ENCODE measurements at regions of chr2 and their contacts with region 1.

Region 1: DNA sequence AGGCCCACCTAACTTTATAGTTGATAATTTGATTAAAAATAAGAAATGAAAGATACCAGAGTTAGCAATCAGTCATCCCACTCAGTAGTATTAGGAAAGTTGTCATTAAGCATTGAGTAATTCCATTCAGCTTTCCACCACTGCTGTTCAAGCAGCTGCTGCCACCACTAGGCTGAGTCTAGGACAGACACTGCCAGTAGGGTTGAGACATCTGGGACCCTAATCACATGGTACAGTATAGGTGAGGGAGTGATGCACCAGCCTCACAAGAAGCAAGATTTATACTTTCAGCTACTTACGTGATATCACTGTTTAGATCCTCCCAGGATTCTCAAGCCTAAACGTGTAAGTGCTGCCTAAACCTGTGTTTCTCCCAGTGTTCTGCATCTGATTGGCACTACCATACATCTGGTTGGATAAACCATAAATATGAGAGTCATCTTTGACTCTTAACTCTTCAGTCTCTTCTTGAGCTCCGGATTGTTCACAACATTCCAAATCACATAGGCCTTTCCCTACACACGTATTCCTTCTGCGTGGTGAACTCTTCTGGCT is 3.2 kb downstream of the UBXN4 start:
- DNase-seq: peak; percentile 34 to 60 (median 52)
- H3K4me3 ChIP-seq: no peak overlapping the region
- H3K27ac ChIP-seq: no peak overlapping the region
- H3K4me1 ChIP-seq: peaks cover 6 to 19% (median 18%) of the 10 kb centered on the region in 4 experiments
- H3K27me3 ChIP-seq: no peaks in the 10 kb centered on the region

Region 2: DNA sequence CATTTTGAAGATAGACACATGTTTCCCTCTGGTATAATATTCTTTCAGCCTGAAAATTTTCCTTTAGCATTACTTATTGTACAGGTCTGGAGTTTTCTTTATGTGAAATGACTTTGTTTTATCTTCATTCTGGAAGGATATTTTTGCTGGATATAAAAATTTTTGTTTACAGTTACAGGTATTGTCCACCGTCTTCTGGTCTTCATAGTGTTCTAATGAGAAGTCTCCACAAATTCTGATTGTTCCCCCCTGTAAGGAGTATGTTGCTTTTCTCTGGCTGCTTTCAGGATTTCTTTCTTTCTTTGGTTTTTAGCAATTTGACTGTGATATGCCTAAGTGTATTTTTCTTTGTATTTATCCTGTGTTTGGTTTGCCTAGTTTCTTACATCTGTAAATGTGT is 11.9 kb after region 1 on chr2:
- CTCF ChIA-PET with region 1: interaction called, 15 read pairs
- POLR2A ChIA-PET with region 1: interaction called, 3 read pairs
- DNase-seq: peak in 1 of 3 donors; percentile 27
- H3K4me3 ChIP-seq: no peak overlapping the region
- H3K27ac ChIP-seq: no peak overlapping the region
- H3K4me1 ChIP-seq: no peaks in the 10 kb centered on the region
- H3K27me3 ChIP-seq: no peaks in the 10 kb centered on the region

Region 3: GRCh38 chr2:135817951-135818350 is 73.1 kb after region 1 on chr2:
- CTCF ChIA-PET with region 1: no interaction called
- POLR2A ChIA-PET with region 1: no interaction called
- DNase-seq: no peak
- H3K4me3 ChIP-seq: no peak overlapping the region
- H3K27ac ChIP-seq: no peak overlapping the region
- H3K4me1 ChIP-seq: peaks cover 7 to 22% (median 18%) of the 10 kb centered on the region in 4 experiments
- H3K27me3 ChIP-seq: no peaks in the 10 kb centered on the region

Region 4: GRCh38 chr2:136013955-136014354 is 269.1 kb after region 1 on chr2:
- CTCF ChIA-PET with region 1: no interaction called
- POLR2A ChIA-PET with region 1: no interaction called
- DNase-seq: no peak
- H3K4me3 ChIP-seq: no peak overlapping the region
- H3K27ac ChIP-seq: no peak overlapping the region
- H3K4me1 ChIP-seq: peaks cover 8 to 29% (median 25%) of the 10 kb centered on the region in 4 experiments
- H3K27me3 ChIP-seq: no peaks in the 10 kb centered on the region